Activated CD4-positive, alpha-beta T cell treated with anti-CD3 and anti-CD28 coated beads for 36 hours (primary cell): ENCODE measurements at regions of chr1 and their contacts with region 1.

Region 1: GRCh38 chr1:197902454-197903195 is at the start of gene C1orf53:
- DNase-seq: peak; percentile 87
- ATAC-seq: peak; percentile 95
- H3K4me3 Mint-ChIP-seq: peak within 1 kb of the TSS; percentile 76
- H3K27ac Mint-ChIP-seq: peak within 1 kb of the TSS; percentile 88
- H3K4me1 Mint-ChIP-seq: peaks cover 14% of the 10 kb centered on the region
- H3K27me3 Mint-ChIP-seq: peaks cover 37% of the 10 kb centered on the region
- total RNA-seq, gene C1orf53: 0.66 TPM in 1 of 2 experiments, not detected in the other

Region 2: DNA sequence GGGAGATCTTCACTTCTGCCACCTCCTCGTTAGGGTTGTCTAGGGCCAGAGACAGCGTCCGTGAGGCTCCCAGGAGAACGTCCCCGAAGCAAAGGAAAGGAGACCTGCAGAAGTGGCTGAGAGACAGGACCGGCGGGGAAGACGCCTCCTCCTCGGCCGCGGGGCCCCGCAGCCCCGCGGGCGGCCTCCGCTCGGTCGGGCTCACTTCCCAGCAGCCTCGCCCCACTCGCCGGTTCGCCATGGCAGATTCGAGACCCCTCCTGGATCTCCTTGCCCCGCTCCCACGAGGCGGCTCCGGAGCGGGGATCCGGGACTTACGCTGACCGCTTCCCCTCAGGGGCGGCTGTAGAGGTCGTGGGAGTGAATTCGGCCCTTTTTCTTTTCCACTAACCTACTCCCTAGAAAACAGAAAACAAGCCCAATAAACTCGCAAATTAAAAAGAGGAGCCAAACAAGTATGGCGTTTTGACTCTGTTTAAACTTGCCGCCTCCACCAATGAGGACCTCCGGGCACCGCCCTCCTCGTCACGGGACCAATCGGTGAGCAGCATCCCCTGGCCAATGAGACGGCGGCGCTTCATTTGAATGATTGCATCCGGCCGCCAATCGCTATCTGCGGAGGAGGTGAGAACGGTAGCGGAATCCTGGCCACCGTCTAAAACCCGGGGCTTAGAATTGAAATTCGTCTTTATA is 756.3 kb before region 1 on chr1 and contains the start of gene ASPM:
- CTCF ChIA-PET with region 1: no interaction called
- POLR2A ChIA-PET with region 1: no interaction called
- intact Hi-C with region 1: loop called in 1 of 2 experiments (anchors 5 kb)
- DNase-seq: peak; percentile 97
- ATAC-seq: peak; percentile 98
- H3K4me3 Mint-ChIP-seq: peak within 1 kb of the TSS; percentile 97
- H3K27ac Mint-ChIP-seq: peak within 1 kb of the TSS; percentile 91
- H3K4me1 Mint-ChIP-seq: peaks cover 13% of the 10 kb centered on the region
- H3K27me3 Mint-ChIP-seq: peaks cover 3% of the 10 kb centered on the region
- total RNA-seq, gene ASPM: 47.8 to 49.5 TPM

Region 3: DNA sequence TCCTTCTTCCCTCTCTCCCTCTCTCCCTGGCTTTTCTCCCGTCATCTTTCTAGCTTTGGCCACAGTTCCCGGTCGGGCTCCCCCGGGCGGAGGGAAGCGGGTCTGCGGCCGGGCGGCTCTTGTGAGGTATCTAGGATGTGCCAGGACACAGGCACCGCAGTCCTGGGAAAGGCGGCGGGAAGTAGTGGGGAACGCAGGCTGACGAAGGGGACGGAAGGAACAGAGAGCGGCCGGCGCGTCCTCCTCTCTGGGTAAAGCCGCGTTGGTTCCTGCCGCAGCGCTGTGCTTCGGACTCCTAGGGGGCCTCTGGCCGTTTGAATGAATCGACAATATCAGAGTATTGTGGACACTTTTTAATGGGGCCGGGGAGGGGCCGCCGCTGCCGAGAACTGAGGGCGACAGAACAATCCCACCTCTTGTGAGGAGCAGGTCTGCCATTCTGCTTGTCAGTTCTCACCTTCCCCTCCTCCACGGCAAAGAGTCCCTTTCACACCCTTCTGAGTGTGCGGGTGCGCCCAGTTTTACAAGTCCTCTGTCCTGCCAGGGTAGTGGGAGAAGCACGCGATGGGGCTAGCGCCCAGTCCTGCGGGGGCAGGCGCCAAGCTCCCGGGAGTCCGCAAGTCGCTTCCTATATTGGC is 13.4 kb after region 1 on chr1:
- CTCF ChIA-PET with region 1: interaction called, 16 read pairs
- POLR2A ChIA-PET with region 1: interaction called, 4 read pairs
- intact Hi-C with region 1: loop called (anchors 1 to 2 kb)
- DNase-seq: peak; percentile 29
- ATAC-seq: no peak
- H3K4me3 Mint-ChIP-seq: peak overlapping the region; percentile 67
- H3K27ac Mint-ChIP-seq: no peak overlapping the region
- H3K4me1 Mint-ChIP-seq: peaks cover 72% of the 10 kb centered on the region
- H3K27me3 Mint-ChIP-seq: peaks cover 96% of the 10 kb centered on the region